Ascending aorta (tissue), 2 donors: ENCODE measurements at regions of chr15 and their contacts with region 1.

Region 1: DNA sequence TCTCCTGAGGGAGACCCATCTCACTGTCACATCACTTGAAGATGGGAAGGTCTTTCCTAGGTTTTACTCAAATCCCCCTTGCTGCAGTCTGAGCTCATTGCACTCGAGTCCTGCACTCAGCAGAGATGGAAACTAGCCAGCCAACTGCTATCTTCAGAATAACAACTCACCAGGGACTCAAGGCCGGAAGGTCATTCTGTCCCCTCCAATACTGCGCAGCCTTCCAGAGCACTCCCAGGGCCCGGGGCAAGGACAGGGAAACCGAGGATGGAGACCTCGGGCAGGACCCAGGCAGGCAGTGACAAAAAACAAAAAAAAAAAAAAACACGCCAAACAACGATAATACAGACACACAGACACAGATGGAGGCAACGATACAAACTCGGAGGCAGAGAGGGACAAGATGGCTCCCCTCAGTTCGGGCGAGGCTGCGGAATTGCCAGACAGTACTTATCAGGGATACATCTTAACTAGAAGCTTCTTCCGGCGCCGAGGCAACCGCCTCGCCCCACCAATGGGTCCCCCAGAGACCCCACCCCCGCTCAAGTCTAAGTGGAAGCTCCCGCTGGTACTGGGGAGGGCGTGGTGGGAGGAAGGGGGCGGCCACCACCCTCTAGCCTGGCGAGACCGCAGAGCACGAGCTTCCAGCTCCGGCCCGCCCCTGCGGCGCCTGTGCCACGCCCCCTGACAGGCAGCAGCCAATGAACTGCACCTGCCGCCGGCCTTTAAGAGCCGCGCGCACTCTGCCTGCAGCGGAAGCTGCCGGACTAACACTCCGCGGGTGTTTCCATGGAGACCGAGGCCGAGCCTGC is 7.0 kb upstream of the MAP1A start:
- DNase-seq: peak; percentile 95 to 99
- H3K4me3 ChIP-seq: peak overlapping the region; percentile 49 to 63
- H3K27ac ChIP-seq: peak overlapping the region; percentile 51 to 59
- H3K4me1 ChIP-seq: peaks cover 0 to 14% of the 10 kb centered on the region in 2 donors
- H3K27me3 ChIP-seq: no peaks in the 10 kb centered on the region
- CTCF ChIP-seq: peak in 2 of 3 experiments; percentile 9 to 30

Region 2: DNA sequence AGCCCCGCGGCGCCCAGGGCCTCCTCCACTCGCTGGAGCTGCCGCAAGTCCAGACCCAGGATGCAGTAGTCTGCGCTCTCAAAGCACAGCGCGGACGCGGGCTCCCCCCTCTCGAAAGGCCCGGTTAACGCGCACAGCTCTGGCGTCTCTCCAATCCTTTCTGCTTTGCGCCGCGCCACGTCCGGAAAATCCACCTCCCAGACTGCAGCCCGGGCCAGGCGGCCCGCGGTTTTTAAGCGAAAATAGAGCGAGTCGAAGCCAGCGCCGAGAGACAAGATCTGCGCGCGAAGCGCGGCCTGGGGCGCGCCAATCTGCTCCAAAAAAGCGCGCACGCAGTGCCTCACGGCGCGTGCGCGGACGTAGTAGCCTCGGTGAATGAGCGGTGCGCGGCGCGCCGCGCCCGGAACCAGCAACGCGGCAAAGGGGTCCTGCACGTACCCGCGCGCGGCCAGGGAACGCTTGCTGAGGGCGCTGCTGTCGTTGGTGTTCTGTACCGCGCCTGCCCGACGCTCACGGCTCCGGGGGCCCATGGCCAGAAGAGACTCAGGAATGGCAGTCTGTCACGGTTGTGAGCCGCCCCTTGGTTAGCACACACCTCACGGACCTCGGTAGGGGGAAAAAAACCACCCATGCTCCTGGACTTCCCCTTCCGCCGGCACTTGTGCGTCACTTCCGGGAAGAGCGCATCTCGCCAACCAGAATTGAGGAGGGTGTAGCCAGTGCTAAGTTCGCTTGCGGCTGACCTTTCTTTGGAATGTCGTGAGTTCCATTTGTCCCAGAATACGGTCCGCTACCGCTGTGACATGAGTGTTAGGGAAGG is 180.2 kb before region 1 on chr15 and contains the start of gene LCMT2:
- intact Hi-C with region 1: loop called (anchors 5 kb)
- DNase-seq: peak; percentile 67 to 96
- H3K4me3 ChIP-seq: peak within 1 kb of the TSS; percentile 70 to 86
- H3K27ac ChIP-seq: peak within 1 kb of the TSS; percentile 93 to 94
- H3K4me1 ChIP-seq: peaks cover 14 to 23% of the 10 kb centered on the region in 2 donors
- H3K27me3 ChIP-seq: no peaks in the 10 kb centered on the region
- CTCF ChIP-seq: no peak
- total RNA-seq, gene LCMT2: 1.2 TPM

Region 3: GRCh38 chr15:43483306-43484128 is 26.9 kb before region 1 on chr15:
- intact Hi-C with region 1: loop called (anchors 5 kb)
- DNase-seq: no peak
- H3K4me3 ChIP-seq: no peak overlapping the region
- H3K27ac ChIP-seq: no peak overlapping the region
- H3K4me1 ChIP-seq: no peaks in the 10 kb centered on the region
- H3K27me3 ChIP-seq: no peaks in the 10 kb centered on the region
- CTCF ChIP-seq: peak in 1 of 3 experiments; percentile 36

Region 4: GRCh38 chr15:43776718-43777583 is 266.5 kb after region 1 on chr15 and contains the start of gene ELL3:
- intact Hi-C with region 1: loop called (anchors 10 kb)
- DNase-seq: peak; percentile 53 to 91
- H3K4me3 ChIP-seq: peak within 1 kb of the TSS; percentile 57 to 73
- H3K27ac ChIP-seq: peak within 1 kb of the TSS; percentile 88 to 92
- H3K4me1 ChIP-seq: peaks cover 0 to 11% of the 10 kb centered on the region in 2 donors
- H3K27me3 ChIP-seq: no peaks in the 10 kb centered on the region
- CTCF ChIP-seq: peak; percentile 79 to 87 (median 84)
- total RNA-seq, gene ELL3: 39.5 TPM